ENCODE measurements at regions of chr1 and their contacts with region 1.

Region 1: GRCh38 chr1:24201941-24202440 is 14.9 kb upstream of the IFNLR1 start:
- DNase-seq: peak; percentile 69
- H3K4me3 ChIP-seq: no peak overlapping the region
- H3K27ac ChIP-seq: no peak overlapping the region
- H3K27me3 ChIP-seq: peaks cover 8% of the 10 kb centered on the region
- CTCF ChIP-seq: peak; percentile 88

Region 2: GRCh38 chr1:23878668-23879067 is 323.3 kb before region 1 on chr1:
- CTCF ChIA-PET with region 1: no interaction called
- POLR2A ChIA-PET with region 1: no interaction called
- DNase-seq: no peak
- H3K4me3 ChIP-seq: no peak overlapping the region
- H3K27ac ChIP-seq: no peak overlapping the region
- H3K27me3 ChIP-seq: peaks cover 9% of the 10 kb centered on the region
- CTCF ChIP-seq: no peak

Region 3: GRCh38 chr1:23930861-23931490 is 271.0 kb before region 1 on chr1:
- CTCF ChIA-PET with region 1: no interaction called
- POLR2A ChIA-PET with region 1: no interaction called
- DNase-seq: peak; percentile 18
- H3K4me3 ChIP-seq: no peak overlapping the region; the same call in 1 of the 2 replicates
- H3K27ac ChIP-seq: peak overlapping the region; percentile 23
- H3K27me3 ChIP-seq: peaks cover 8% of the 10 kb centered on the region
- CTCF ChIP-seq: no peak

Region 4: DNA sequence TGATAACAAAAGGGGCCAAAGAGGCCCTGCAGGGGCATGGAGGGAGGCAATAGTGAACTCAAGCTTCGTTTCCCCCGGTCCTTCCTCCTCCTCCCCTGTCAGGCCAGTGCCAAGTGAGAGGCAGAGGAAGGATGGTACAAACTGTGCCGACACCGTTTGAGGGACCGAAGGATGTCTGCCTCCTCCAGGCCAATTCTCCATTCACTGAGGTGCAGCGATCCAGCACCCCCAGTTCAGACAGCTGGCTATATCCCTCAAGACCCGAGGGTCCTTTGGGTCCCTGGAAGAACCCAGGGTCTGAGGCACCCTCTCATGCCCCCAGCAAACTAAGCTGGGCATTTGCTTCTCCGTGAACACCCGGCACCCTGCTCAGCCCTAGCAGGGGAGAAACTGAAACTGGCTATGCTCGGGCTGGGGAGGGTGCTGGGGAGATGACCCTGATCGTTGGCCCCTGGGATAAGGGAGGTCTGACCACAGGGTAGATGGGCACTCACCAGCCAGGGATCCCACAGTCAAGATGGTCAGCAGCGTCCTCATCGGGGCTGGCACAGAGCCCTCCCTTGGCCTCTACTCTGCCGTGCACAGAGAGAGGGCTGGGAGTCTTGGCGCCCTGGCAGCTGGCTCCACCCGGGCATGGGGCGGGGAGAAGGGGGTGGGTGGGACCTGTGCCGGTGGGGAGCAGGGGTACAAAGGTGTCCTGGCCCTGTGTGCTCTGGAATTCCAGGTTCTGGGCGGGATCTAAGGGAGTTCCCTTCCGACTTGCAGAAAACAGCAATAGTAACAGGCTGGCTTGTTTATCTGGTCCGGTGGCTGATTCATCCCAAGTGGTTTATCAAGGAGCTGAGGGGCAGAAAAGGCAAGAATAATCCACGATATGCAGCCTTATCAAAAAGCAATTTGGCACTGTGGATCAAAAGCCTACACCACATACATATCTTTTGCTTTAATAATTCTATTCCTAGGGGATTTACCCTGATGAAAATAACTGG is 59.2 kb before region 1 on chr1 and contains the start of gene IL22RA1:
- CTCF ChIA-PET with region 1: no interaction called
- POLR2A ChIA-PET with region 1: no interaction called
- DNase-seq: no peak
- H3K4me3 ChIP-seq: peak within 1 kb of the TSS; percentile 46
- H3K27ac ChIP-seq: no peak within 1 kb of the TSS
- H3K27me3 ChIP-seq: peaks cover 49% of the 10 kb centered on the region
- CTCF ChIP-seq: no peak
- polyA plus RNA-seq, gene IL22RA1: not detected in 2 replicates

Region 5: DNA sequence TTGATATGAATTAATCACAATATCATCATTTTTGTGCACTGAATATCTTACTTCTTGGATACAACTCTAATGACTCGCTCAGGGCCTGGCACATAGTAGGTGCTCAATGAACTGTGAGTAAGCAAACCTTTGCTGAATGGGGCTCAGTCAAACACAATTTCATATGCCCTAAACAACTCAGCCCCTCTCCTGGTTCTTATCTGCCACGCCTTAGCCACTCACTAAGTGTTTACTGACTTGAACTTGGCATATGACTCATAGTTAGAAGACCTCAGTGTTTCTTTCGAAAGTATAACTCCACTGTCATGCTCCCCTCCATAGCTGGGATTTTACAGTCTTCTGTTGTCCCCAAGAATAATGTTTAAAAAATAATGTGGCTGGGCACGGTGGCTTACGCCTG is 10.1 kb before region 1 on chr1:
- CTCF ChIA-PET with region 1: interaction called, 16 read pairs
- POLR2A ChIA-PET with region 1: interaction called, 5 read pairs
- DNase-seq: no peak
- H3K4me3 ChIP-seq: no peak overlapping the region
- H3K27ac ChIP-seq: no peak overlapping the region
- H3K27me3 ChIP-seq: peaks cover 11% of the 10 kb centered on the region
- CTCF ChIP-seq: no peak

Region 6: DNA sequence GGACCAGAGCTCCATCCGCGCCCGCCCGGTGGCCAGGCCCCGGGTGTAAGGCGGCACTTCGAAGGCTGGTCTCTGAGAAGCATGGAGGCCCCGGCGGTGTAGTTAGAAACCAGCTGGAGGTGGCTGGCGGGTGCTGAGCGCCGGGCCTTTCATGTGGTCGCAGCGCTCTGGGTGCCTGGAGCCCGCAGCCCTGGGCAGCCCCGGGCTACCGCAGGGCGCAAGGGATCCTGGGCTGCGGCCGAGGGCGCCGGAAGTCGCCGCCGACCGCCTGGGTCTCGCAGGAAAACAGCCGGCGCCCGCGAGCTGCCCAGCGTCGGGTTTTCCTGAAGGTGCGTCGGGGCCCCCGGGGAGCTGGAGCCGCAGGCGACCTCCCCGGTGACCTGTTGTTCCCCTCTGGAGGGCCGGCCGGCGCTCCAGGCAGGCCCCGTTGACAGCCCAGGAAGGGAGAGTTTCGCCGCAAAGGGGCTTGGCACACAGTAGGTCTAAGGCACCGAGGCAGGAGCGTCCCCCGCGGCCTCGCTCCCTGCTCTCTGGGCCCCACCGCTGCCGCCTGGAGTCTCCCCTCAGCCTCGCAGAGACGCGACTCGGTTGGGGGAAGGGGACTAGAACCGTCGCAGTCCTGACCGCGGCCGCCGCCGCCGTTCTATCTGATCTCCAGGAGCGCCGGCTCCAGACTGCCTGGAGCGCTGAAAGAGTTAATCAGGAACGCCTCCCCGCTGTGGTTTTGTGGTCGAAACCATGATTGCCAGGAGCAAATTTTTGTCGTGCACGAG is 119.9 kb after region 1 on chr1:
- CTCF ChIA-PET with region 1: interaction called, 14 read pairs
- POLR2A ChIA-PET with region 1: no interaction called
- DNase-seq: peak; percentile 51
- H3K4me3 ChIP-seq: peak overlapping the region; percentile 54
- H3K27ac ChIP-seq: peak overlapping the region; percentile 57
- H3K27me3 ChIP-seq: peaks cover 33% of the 10 kb centered on the region
- CTCF ChIP-seq: no peak

Region 7: DNA sequence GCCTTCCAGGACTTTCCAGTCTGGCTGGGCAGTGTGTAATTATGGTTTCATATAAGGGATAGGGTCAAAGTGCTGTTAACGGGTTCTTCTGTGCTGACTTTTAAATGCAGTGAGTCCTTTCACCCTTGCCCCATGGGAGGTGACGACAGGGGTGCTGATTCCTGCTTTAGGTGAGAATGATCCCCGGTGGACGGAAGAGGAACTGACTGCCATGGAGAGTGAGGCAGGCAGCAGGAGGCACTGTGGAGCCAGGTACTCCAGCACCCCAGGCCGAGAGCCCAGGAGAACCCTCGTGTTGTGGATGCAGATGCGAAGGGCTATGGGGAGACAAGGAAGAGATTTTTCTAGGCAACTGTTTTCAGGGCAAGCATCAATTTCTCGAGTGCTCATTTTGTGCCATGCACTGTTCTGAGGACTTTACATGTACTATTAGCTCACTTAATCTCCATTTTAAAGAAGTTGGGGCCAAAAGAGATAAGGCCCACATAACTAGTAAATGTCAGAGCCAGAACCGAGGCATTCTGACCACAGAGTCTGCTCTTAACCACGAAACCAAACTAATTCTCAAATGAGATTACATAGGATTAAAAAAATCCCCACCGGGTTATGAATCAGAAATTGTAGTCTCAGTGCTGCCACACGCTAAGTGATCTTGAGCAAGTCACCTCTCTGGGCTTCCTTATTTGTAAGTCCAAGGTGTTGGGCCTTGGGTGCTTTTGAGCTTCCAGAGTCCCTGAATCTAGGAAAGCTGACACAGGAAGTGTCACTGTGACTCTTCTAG is 183.4 kb after region 1 on chr1:
- CTCF ChIA-PET with region 1: interaction called, 659 read pairs
- POLR2A ChIA-PET with region 1: interaction called, 7 read pairs
- DNase-seq: no peak
- H3K4me3 ChIP-seq: no peak overlapping the region
- H3K27ac ChIP-seq: no peak overlapping the region
- H3K27me3 ChIP-seq: no peaks in the 10 kb centered on the region
- CTCF ChIP-seq: peak; percentile 60

Region 8: DNA sequence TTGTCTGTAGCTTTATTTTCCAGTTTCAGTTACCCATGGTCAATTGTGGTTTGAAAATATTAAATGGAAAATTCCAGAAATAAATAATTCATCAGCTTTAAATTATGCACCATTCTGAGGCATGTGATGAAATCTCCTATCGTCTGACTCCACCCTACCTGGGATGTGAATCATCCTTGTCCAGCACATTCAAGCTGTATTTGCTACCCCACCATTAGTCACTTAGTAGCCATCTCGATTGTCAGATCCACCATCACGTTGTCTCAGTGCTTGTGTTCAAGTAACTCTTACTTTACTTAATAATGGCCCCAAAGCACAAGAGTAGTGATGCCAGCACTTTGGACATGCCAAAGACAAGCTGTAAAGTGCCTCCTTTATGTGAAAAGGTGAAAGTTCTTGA is 207.5 kb after region 1 on chr1:
- CTCF ChIA-PET with region 1: interaction called, 13 read pairs
- POLR2A ChIA-PET with region 1: no interaction called
- DNase-seq: peak; percentile 37
- H3K4me3 ChIP-seq: no peak overlapping the region
- H3K27ac ChIP-seq: no peak overlapping the region
- H3K27me3 ChIP-seq: no peaks in the 10 kb centered on the region
- CTCF ChIP-seq: no peak

Region 9: DNA sequence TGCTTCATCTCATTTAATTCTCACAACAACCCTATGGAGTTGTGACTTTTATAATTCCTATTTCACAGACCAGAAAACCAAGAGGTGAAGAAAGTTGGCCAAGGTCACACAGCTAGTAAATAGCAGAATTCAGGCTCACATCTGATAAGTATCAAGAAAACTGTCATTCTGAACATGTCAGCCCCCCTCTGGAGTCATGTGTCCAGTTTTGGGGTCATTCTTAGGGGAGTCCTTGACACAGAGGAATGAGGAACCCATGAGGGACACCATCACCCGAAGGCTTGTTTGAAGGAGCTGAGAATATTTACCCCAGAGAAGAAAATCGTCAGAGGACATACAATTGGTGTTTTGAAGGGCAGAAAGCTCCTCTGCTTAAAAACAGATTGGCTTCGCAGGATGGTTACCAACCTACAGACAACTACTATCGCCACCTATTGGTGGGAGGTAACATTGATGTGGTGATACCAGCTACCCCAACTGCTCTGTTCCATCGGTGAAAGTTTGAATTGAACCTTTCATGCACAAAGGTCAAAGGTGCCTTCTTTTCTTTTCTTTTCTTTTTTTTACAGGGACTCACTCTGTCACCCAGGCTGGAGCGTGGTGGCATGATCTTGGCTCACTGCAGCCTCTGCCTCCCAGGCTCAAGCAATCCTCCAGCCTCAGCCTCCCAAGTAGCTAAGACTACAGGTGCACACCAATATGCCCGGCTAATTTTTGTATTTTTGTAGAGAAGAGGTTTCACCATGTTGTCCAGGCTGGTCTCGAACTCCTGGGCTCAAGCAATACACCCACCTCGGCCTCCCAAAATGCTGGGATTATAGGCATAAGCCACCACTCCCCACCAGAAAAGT is 385.2 kb after region 1 on chr1:
- CTCF ChIA-PET with region 1: interaction called, 26 read pairs
- POLR2A ChIA-PET with region 1: no interaction called
- DNase-seq: peak; percentile 6
- H3K4me3 ChIP-seq: no peak overlapping the region
- H3K27ac ChIP-seq: no peak overlapping the region
- H3K27me3 ChIP-seq: peaks cover 48% of the 10 kb centered on the region
- CTCF ChIP-seq: peak; percentile 80

Measured in AG04450 (cell line).